ENCODE measurements at regions of chr5 and their contacts with region 1.

Region 1: GRCh38 chr5:61783481-61783880 is 451.4 kb downstream of the ZSWIM6 start:
- DNase-seq: no peak
- ATAC-seq: no peak
- H3K4me3 ChIP-seq: no peak overlapping the region
- H3K27ac ChIP-seq: no peak overlapping the region
- H3K4me1 ChIP-seq: no peaks in the 10 kb centered on the region
- H3K27me3 ChIP-seq: peaks cover 44% of the 10 kb centered on the region
- CTCF ChIP-seq: no peak
- POLR2A ChIP-seq: no peak
- RAD21 ChIP-seq: no peak

Region 2: GRCh38 chr5:61768692-61769281 is 14.7 kb before region 1 on chr5:
- CTCF ChIA-PET with region 1: interaction called, 10 read pairs
- POLR2A ChIA-PET with region 1: no interaction called
- RAD21 ChIA-PET with region 1: no interaction called
- intact Hi-C with region 1: no loop called
- DNase-seq: peak; percentile 63
- ATAC-seq: peak; percentile 100
- H3K4me3 ChIP-seq: no peak overlapping the region
- H3K27ac ChIP-seq: no peak overlapping the region
- H3K4me1 ChIP-seq: no peaks in the 10 kb centered on the region
- H3K27me3 ChIP-seq: peaks cover 24% of the 10 kb centered on the region; the same call in 1 of the 2 replicates
- CTCF ChIP-seq: peak; percentile 99 to 100 (median 100)
- POLR2A ChIP-seq: no peak
- RAD21 ChIP-seq: peak; percentile 57

Region 3: DNA sequence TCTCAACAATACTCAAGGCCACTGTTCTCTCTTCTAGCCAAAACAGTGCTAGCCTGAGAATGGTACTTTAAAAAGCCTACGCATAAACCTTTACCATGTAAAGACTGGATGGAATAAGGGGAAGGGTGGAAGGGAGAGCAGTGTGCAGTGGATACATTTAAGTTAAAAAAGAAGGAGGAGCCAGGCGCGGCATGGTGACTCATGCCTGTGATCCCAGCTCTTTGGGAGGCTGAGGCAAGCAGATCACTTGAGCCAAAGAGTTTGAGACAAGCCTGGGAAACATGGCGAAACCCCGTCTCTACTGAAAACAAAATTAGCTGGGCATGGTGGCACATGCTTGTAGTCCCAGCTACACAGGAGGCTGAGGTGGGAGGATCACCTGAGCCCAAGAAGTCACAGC is 394.8 kb after region 1 on chr5:
- CTCF ChIA-PET with region 1: no interaction called
- POLR2A ChIA-PET with region 1: no interaction called
- RAD21 ChIA-PET with region 1: no interaction called
- intact Hi-C with region 1: no loop called
- DNase-seq: no peak
- ATAC-seq: no peak
- H3K4me3 ChIP-seq: no peak overlapping the region
- H3K27ac ChIP-seq: no peak overlapping the region
- H3K4me1 ChIP-seq: no peaks in the 10 kb centered on the region
- H3K27me3 ChIP-seq: peaks cover 42% of the 10 kb centered on the region
- CTCF ChIP-seq: no peak
- POLR2A ChIP-seq: no peak
- RAD21 ChIP-seq: no peak

Measured in HCT116 (cell line).